GM12878 (cell line): ENCODE measurements at regions of chr17 and their contacts with region 1.

Region 1: DNA sequence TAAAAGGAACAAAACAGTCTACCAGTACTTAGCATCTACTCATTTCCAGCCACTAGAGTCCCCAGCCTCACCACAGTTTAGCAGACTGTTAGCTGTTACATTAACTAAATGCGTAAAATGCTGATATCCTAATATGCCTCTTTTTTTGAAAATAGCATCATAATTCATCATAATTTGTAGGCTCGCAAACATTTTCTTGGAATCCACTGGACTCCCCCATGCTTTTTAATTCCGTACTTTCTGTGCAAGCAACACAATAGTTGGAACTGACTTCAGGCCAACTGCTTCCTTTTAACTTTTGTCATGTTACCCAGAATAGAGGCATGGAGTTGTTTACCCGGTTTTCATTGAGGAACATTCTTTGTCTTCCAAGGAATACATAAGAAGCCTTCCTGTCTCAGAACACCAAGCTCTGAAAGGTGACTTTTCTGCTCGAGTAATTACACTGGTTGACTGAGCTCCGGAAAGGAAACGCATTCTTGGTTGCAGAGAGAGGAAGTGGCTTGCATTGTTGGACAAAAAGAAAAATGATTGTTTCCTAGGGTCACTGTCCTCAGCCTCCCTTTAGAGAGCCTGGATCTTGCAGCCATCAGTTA is 30.9 kb upstream of the SEC14L1 start:
- DNase-seq: peak; percentile 60
- ATAC-seq: peak; percentile 45
- H3K4me3 ChIP-seq: no peak overlapping the region
- H3K27ac ChIP-seq: peak overlapping the region; percentile 2
- H3K4me1 ChIP-seq: peaks cover 41% of the 10 kb centered on the region
- H3K27me3 ChIP-seq: no peaks in the 10 kb centered on the region
- CTCF ChIP-seq: peak in 1 of 3 experiments; percentile 5; a peak in 1 of 6 replicates
- EP300 ChIP-seq: no peak
- POLR2A ChIP-seq: no peak
- RAD21 ChIP-seq: no peak

Region 2: DNA sequence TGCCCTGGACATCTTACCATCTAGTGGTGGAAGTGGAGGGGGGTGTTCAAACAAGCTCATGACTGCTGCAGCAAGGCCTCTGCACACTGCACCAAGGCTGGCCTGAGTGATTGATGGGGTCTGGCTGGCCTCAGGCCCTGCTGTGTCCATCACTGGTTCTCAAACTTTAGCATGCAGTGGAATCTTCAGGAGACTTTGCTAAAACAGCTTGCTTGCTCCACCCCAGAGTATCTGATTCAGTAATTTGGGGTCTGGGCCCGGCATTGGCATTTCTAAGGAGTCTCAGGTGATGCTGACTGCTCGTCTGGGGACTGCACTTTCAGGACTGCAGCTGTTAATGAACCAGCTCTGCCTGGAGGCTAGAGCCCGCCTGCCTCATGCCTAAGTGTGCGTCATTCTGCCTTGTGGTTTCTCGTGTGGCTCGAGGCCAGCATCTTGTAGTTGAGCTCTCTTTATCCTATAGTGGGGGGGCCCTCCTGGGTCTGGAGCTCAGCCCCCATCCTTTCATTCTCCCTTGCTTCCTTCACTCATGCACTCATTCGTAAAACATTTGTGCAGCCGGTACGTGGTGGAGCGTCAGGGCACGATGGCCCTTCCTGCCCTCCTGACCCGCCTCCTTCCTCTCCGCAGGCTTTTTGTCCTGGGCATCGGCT is 237.5 kb before region 1 on chr17:
- CTCF ChIA-PET with region 1: no interaction called
- POLR2A ChIA-PET with region 1: no interaction called
- RAD21 ChIA-PET with region 1: no interaction called
- SMC1A ChIA-PET with region 1: no interaction called
- in situ Hi-C with region 1: no loop called
- intact Hi-C with region 1: no loop called
- DNase-seq: no peak
- ATAC-seq: peak; percentile 44; the same call in 1 of the 3 replicates
- H3K4me3 ChIP-seq: no peak overlapping the region
- H3K27ac ChIP-seq: no peak overlapping the region
- H3K4me1 ChIP-seq: no peaks in the 10 kb centered on the region; the same call in 1 of the 2 replicates
- H3K27me3 ChIP-seq: peaks cover 0 to 5% of the 10 kb centered on the region in 2 experiments; a peak in 3 of 4 replicates
- CTCF ChIP-seq: no peak
- EP300 ChIP-seq: no peak
- POLR2A ChIP-seq: no peak
- RAD21 ChIP-seq: no peak

Region 3: GRCh38 chr17:77096570-77097214 is 13.2 kb before region 1 on chr17:
- CTCF ChIA-PET with region 1: interaction called, 7 read pairs
- POLR2A ChIA-PET with region 1: interaction called, 4 read pairs
- RAD21 ChIA-PET with region 1: interaction called, 12 read pairs
- SMC1A ChIA-PET with region 1: interaction called, 10 read pairs
- in situ Hi-C with region 1: no loop called
- intact Hi-C with region 1: no loop called
- DNase-seq: no peak
- ATAC-seq: peak; percentile 85
- H3K4me3 ChIP-seq: no peak overlapping the region
- H3K27ac ChIP-seq: 0 out of 2 replicates have a peak overlapping the region, but pooled peaks have one; percentile 33
- H3K4me1 ChIP-seq: peaks cover 4% of the 10 kb centered on the region
- H3K27me3 ChIP-seq: no peaks in the 10 kb centered on the region
- CTCF ChIP-seq: peak; percentile 74 to 83 (median 76)
- EP300 ChIP-seq: no peak
- POLR2A ChIP-seq: no peak
- RAD21 ChIP-seq: peak; percentile 91

Region 4: DNA sequence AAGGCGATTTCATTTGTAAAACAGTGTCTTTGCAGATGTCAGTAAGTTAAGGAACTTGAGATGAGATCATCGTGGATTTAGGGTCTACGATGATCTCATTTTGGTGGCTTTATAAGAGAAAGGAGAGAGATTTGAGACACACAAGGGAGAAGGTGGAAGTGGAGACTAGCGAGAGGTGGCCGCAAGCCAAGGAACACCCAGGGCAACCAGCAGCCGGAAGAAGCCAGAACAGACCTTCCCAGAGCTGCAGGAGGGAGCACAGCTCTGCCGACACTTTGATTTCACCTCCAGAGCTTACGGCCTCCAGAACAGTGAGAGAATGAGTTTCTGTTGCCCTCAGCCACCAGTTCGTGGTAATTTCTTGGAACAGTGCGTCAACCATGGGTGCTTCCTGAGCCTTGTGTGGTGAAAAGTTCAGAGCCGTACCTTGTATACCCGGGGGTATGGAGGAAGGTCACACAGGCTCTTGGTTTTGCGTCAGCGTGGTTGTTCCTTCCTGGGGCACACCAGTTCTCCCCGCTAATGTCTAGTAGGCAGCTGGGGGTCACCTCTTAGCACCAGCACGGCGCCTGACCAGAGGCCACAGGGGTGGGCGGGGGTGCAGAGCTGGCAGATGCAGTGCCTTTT is 18.0 kb after region 1 on chr17:
- CTCF ChIA-PET with region 1: interaction called, 7 read pairs
- POLR2A ChIA-PET with region 1: interaction called, 13 read pairs
- RAD21 ChIA-PET with region 1: interaction called, 3 read pairs
- SMC1A ChIA-PET with region 1: interaction called, 4 read pairs
- in situ Hi-C with region 1: no loop called
- intact Hi-C with region 1: no loop called
- DNase-seq: no peak
- ATAC-seq: no peak
- H3K4me3 ChIP-seq: no peak overlapping the region
- H3K27ac ChIP-seq: no peak overlapping the region
- H3K4me1 ChIP-seq: peaks cover 5% of the 10 kb centered on the region
- H3K27me3 ChIP-seq: no peaks in the 10 kb centered on the region
- CTCF ChIP-seq: no peak
- EP300 ChIP-seq: no peak
- POLR2A ChIP-seq: 0 out of 2 replicates have a peak, but pooled peaks have one; percentile 34
- RAD21 ChIP-seq: no peak

Region 5: DNA sequence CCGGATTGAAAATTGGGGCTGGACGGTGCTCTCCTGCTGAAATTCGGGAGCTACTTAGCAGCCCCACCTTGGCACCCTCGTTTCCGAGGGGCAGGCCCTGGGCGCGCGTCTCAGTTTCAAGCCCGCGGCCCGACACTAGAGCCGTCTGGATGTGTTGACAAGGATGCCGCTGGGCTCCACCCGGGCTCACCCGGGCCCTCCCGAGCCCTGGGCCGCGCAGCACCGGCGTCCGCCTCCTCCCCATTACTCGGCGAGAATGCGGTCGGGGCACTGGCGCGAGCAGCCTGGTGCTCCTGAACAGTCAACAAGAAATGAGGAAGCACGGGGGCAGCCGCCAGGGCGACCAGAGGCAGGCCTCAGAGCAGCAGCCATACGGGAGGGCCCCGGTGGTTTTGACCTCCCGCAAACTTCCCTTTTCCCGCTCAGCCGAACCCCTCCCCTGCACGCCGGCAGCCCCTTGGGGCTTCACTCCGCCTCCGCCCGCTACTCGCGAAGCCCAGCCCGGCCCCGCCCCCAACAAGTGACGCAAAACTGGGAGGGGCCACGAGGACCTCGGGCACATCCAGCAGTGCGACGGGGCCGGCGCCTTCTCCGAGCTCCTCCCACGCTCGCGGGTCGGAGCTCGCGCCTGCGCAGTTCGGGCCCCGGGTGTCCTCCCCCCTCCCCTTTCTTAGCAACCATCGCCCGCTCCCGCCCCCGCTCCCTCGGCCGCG is 30.5 kb after region 1 on chr17:
- CTCF ChIA-PET with region 1: interaction called, 34 read pairs
- POLR2A ChIA-PET with region 1: interaction called, 60 read pairs
- RAD21 ChIA-PET with region 1: interaction called, 87 read pairs
- SMC1A ChIA-PET with region 1: interaction called, 29 read pairs
- in situ Hi-C with region 1: no loop called
- intact Hi-C with region 1: loop called (anchors 1 kb)
- DNase-seq: peak; percentile 93
- ATAC-seq: peak; percentile 83
- H3K4me3 ChIP-seq: peak overlapping the region; percentile 34
- H3K27ac ChIP-seq: peak overlapping the region; percentile 84
- H3K4me1 ChIP-seq: peaks cover 17% of the 10 kb centered on the region
- H3K27me3 ChIP-seq: no peaks in the 10 kb centered on the region
- CTCF ChIP-seq: no peak
- EP300 ChIP-seq: peak; percentile 58 to 70; a peak in 2 of 4 replicates
- POLR2A ChIP-seq: peak; percentile 88
- RAD21 ChIP-seq: peak; percentile 12; the same call in 1 of the 2 replicates

Region 6: DNA sequence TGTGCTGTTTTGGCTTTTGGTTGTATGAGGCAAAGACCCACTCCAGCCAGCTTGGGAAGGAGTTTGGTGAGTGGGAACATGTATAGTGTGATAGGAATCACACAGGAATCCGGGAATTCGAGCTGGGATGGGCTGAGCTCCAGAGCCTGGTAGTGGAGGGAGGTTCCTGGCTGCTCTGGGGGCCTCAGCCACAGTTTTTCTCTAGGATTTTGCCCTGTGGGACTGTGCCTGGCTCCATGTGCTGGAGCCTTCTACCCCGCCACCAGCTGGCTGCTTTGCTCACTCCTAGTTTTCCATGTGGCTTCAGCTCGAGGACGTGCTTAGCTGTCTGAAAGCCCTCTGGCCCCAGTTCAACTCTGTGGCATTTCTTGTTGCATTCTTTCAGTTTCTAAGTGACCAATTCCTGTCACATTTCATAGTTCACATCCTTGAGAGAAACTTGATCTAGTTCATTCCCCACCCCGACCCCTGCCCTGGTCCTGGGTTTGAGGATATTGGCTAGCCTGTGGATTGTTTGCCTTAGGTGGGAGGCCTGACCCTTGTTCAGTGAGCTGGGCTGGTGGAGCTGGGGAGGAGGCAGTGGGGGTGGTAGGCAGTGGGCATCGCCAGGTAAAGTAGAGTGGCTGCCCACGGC is 35.9 kb after region 1 on chr17:
- CTCF ChIA-PET with region 1: interaction called, 34 read pairs
- POLR2A ChIA-PET with region 1: interaction called, 60 read pairs
- RAD21 ChIA-PET with region 1: interaction called, 87 read pairs
- SMC1A ChIA-PET with region 1: interaction called, 29 read pairs
- in situ Hi-C with region 1: no loop called
- intact Hi-C with region 1: loop called (anchors 1 kb)
- DNase-seq: peak; percentile 71
- ATAC-seq: peak; percentile 63
- H3K4me3 ChIP-seq: peak overlapping the region; percentile 69
- H3K27ac ChIP-seq: peak overlapping the region; percentile 97
- H3K4me1 ChIP-seq: peaks cover 43% of the 10 kb centered on the region
- H3K27me3 ChIP-seq: no peaks in the 10 kb centered on the region
- CTCF ChIP-seq: peak in 2 of 3 experiments; percentile 8 to 22; a peak in 1 of 6 replicates
- EP300 ChIP-seq: peak in 1 of 2 experiments; percentile 56; a peak in 2 of 4 replicates
- POLR2A ChIP-seq: 0 out of 2 replicates have a peak, but pooled peaks have one; percentile 32
- RAD21 ChIP-seq: no peak